CD8-positive, alpha-beta T cell (primary cell): ENCODE measurements at regions of chr17 and their contacts with region 1.

Region 1: DNA sequence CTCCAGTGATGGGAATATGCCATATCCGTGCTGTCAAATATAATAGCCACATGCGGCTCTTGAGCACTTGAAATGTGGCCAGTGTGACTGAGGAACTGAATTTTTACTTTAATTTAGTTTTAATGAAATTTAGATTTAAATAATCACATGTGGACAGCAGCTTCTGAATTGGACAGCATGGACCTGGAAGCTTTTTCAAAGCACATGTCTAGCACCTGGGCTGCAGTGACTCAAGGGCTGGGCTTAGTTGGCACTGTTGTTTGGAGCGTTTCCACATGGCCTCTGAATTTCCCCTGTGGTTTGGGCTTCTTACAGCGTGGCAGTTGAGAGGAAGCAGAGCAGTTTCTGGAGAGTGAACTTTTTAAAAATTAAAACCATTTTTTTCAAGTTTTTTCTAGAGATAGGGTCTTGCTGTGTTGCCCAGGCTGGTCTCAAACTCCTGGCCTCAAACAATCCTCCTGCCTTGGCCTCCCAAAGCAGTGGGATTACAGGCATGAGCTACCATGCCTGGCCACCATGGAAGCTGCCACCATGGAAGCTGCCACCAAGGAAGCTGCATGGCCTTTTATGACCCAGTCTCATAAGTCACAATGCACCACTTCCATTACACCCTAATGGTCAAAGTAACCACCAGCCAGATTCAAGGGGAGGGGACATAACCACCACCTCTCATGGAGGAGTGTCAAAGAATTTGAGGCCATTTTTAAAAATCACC is 6.7 kb upstream of the TOB1 start:
- DNase-seq: peak in 7 of 9 experiments; percentile 36 to 84 (median 59)
- ATAC-seq: peak; percentile 63
- H3K4me3 ChIP-seq: no peak overlapping the region
- H3K4me3 Mint-ChIP-seq: no peak overlapping the region
- H3K27ac ChIP-seq: no peak overlapping the region
- H3K27ac Mint-ChIP-seq: no peak overlapping the region
- H3K4me1 ChIP-seq: peaks cover 44% of the 10 kb centered on the region
- H3K4me1 Mint-ChIP-seq: peaks cover 40% of the 10 kb centered on the region
- H3K27me3 ChIP-seq: no peaks in the 10 kb centered on the region
- H3K27me3 Mint-ChIP-seq: no peaks in the 10 kb centered on the region
- CTCF ChIP-seq: no peak

Region 2: GRCh38 chr17:50904521-50905459 is 31.9 kb after region 1 on chr17:
- CTCF ChIA-PET with region 1: interaction called, 12 read pairs
- POLR2A ChIA-PET with region 1: interaction called, 196 read pairs
- intact Hi-C with region 1: no loop called
- DNase-seq: peak in 1 of 9 experiments; percentile 29
- ATAC-seq: no peak
- H3K4me3 ChIP-seq: no peak overlapping the region
- H3K4me3 Mint-ChIP-seq: no peak overlapping the region
- H3K27ac ChIP-seq: peak overlapping the region; percentile 46 to 73
- H3K27ac Mint-ChIP-seq: peak overlapping the region; percentile 89
- H3K4me1 ChIP-seq: peaks cover 67% of the 10 kb centered on the region
- H3K4me1 Mint-ChIP-seq: peaks cover 61% of the 10 kb centered on the region
- H3K27me3 ChIP-seq: no peaks in the 10 kb centered on the region
- H3K27me3 Mint-ChIP-seq: no peaks in the 10 kb centered on the region
- CTCF ChIP-seq: no peak

Region 3: GRCh38 chr17:50909765-50910605 is 37.1 kb after region 1 on chr17:
- CTCF ChIA-PET with region 1: interaction called, 12 read pairs
- POLR2A ChIA-PET with region 1: interaction called, 196 read pairs
- intact Hi-C with region 1: no loop called
- DNase-seq: peak; percentile 71 to 94 (median 77)
- ATAC-seq: peak; percentile 87
- H3K4me3 ChIP-seq: peak overlapping the region in 1 of 2 experiments; percentile 24
- H3K4me3 Mint-ChIP-seq: peak overlapping the region; percentile 55
- H3K27ac ChIP-seq: peak overlapping the region; percentile 83 to 92
- H3K27ac Mint-ChIP-seq: peak overlapping the region; percentile 93
- H3K4me1 ChIP-seq: peaks cover 74% of the 10 kb centered on the region
- H3K4me1 Mint-ChIP-seq: peaks cover 61% of the 10 kb centered on the region
- H3K27me3 ChIP-seq: no peaks in the 10 kb centered on the region
- H3K27me3 Mint-ChIP-seq: no peaks in the 10 kb centered on the region
- CTCF ChIP-seq: no peak

Region 4: GRCh38 chr17:50949989-50950881 is 77.4 kb after region 1 on chr17:
- CTCF ChIA-PET with region 1: interaction called, 761 read pairs
- POLR2A ChIA-PET with region 1: interaction called, 102 read pairs
- intact Hi-C with region 1: no loop called
- DNase-seq: peak; percentile 32 to 80 (median 60)
- ATAC-seq: peak; percentile 87
- H3K4me3 ChIP-seq: no peak overlapping the region
- H3K4me3 Mint-ChIP-seq: no peak overlapping the region
- H3K27ac ChIP-seq: no peak overlapping the region
- H3K27ac Mint-ChIP-seq: no peak overlapping the region
- H3K4me1 ChIP-seq: peaks cover 12% of the 10 kb centered on the region
- H3K4me1 Mint-ChIP-seq: peaks cover 22% of the 10 kb centered on the region
- H3K27me3 ChIP-seq: no peaks in the 10 kb centered on the region
- H3K27me3 Mint-ChIP-seq: no peaks in the 10 kb centered on the region
- CTCF ChIP-seq: peak; percentile 49